CD8-positive, alpha-beta memory T cell (primary cell): ENCODE measurements at regions of chr12 and their contacts with region 1.

Region 1: DNA sequence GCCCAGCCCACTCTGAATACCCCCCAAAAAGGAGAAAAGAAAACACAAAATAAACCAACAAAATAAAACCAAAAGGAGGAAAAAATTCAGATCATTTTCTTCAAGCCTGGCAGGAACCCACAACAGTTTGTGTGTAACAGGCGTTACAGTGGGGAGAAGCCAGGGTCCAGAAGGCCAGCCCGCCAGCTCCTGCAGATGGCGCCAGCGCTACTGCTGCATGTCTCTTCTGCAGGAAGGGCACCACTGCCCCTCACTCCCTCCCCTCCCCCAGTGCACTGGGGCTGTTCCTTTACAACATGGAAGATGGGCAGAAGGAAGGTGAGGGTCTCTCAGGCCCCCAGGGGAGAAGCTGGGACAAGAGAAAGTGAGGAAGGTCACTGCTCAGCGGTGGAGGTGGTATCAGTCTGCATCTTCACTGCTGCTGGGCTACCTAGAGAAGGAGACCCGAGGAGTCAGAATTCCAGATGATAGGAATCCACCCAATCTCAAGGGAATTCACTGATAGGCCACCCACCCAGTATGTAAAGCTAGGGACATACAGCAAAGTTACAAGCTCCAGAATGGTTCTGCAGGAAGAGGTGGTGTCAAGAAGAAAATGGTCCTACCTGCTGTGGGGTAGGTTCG is 2.3 kb upstream of the NOP2 start:
- DNase-seq: peak in 3 of 5 donors; percentile 15 to 57 (median 20)
- H3K4me3 ChIP-seq: no peak overlapping the region
- H3K4me3 Mint-ChIP-seq: peak overlapping the region in 5 of 7 donors; percentile 67 to 100 (median 98)
- H3K27ac ChIP-seq: no peak overlapping the region
- H3K27ac Mint-ChIP-seq: peak overlapping the region; percentile 34 to 100 (median 80)
- H3K4me1 ChIP-seq: peaks cover 16% of the 10 kb centered on the region
- H3K4me1 Mint-ChIP-seq: peaks cover 41 to 49% (median 42%) of the 10 kb centered on the region in 3 donors
- H3K27me3 ChIP-seq: no peaks in the 10 kb centered on the region
- H3K27me3 Mint-ChIP-seq: peaks cover 0 to 2% of the 10 kb centered on the region in 2 donors

Region 2: GRCh38 chr12:6476489-6476888 is 93.9 kb before region 1 on chr12:
- CTCF ChIA-PET with region 1: no interaction called
- POLR2A ChIA-PET with region 1: no interaction called
- DNase-seq: no peak
- H3K4me3 ChIP-seq: no peak overlapping the region
- H3K4me3 Mint-ChIP-seq: peak overlapping the region in 1 of 7 donors; percentile 4
- H3K27ac ChIP-seq: no peak overlapping the region
- H3K27ac Mint-ChIP-seq: no peak overlapping the region
- H3K4me1 ChIP-seq: no peaks in the 10 kb centered on the region
- H3K4me1 Mint-ChIP-seq: peaks cover 0 to 3% (median under 1%) of the 10 kb centered on the region in 3 donors
- H3K27me3 ChIP-seq: no peaks in the 10 kb centered on the region
- H3K27me3 Mint-ChIP-seq: peaks cover 6 to 15% of the 10 kb centered on the region in 2 donors

Region 3: DNA sequence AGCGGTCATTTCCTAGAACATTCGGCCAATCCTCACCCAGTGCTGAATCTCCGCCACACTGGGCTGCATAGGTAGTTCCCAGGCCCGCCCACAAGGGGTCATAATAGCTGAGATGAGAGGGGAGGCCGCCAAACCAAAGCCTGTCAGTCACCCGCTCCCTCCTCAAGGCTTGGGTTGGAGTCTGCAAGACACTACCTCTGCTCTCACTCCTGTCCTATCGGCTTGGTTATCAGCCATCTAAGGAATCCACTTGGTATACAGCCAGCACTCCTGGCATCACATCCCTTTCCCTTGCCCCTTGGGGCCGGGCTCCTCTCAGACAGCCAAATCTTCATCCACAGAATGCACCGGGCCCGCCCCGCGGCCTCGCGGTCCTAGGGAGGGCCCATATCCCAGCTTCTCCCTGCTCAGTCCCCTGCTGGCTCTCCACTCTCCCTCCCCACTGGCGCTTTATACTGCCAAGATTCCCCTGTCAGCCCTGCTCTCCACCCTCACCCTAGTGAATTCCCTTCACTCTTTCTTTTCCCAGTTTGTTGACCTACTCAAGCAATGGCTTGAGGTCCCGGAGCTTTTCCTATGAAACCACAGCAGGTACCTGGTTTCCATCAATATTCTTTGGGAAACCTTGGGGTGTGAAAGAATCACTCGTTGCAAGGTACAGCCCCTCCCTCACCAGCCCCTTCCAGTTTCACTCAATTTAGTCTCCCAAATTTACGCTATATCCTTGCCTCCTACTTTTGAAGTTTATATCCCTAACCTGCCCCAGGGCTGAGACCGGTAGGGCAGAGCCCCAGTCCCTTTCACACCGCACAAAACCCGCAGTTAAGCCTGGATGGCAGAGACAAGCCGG is 16.0 kb before region 1 on chr12:
- CTCF ChIA-PET with region 1: interaction called, 17 read pairs
- POLR2A ChIA-PET with region 1: no interaction called
- DNase-seq: peak; percentile 55 to 81 (median 61)
- H3K4me3 ChIP-seq: peak overlapping the region; percentile 70
- H3K4me3 Mint-ChIP-seq: peak overlapping the region; percentile 86 to 97 (median 94)
- H3K27ac ChIP-seq: no peak overlapping the region
- H3K27ac Mint-ChIP-seq: peak overlapping the region in 7 of 8 donors; percentile 56 to 96 (median 81)
- H3K4me1 ChIP-seq: peaks cover 36% of the 10 kb centered on the region
- H3K4me1 Mint-ChIP-seq: peaks cover 42 to 58% (median 51%) of the 10 kb centered on the region in 3 donors
- H3K27me3 ChIP-seq: no peaks in the 10 kb centered on the region
- H3K27me3 Mint-ChIP-seq: no peaks in the 10 kb centered on the region

Region 4: GRCh38 chr12:6559500-6559899 is 10.9 kb before region 1 on chr12:
- CTCF ChIA-PET with region 1: interaction called, 17 read pairs
- POLR2A ChIA-PET with region 1: no interaction called
- DNase-seq: no peak
- H3K4me3 ChIP-seq: no peak overlapping the region
- H3K4me3 Mint-ChIP-seq: peak overlapping the region in 1 of 7 donors; percentile 75
- H3K27ac ChIP-seq: no peak overlapping the region
- H3K27ac Mint-ChIP-seq: peak overlapping the region in 3 of 8 donors; percentile 30 to 63 (median 42)
- H3K4me1 ChIP-seq: peaks cover 29% of the 10 kb centered on the region
- H3K4me1 Mint-ChIP-seq: peaks cover 24 to 33% (median 27%) of the 10 kb centered on the region in 3 donors
- H3K27me3 ChIP-seq: no peaks in the 10 kb centered on the region
- H3K27me3 Mint-ChIP-seq: no peaks in the 10 kb centered on the region

Region 5: DNA sequence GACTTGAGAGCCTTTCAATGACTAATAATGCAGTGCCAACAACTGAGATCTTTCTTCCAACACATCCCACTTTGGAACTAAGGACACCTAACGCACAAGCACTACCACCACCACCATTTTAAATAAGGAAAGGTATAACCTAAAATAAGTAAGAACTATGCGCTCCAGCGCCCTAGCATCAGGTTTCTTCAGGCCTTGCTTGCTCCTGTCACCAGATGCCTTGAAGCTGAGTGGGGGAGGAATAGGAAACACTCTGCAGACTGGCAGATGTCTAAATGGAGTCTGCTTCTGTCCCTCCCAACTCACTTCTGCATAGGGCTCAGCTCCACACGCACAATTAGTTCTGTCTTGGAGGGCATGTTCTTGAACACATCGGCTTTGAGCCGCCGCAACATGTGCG is 21.7 kb after region 1 on chr12:
- CTCF ChIA-PET with region 1: interaction called, 11 read pairs
- POLR2A ChIA-PET with region 1: no interaction called
- DNase-seq: no peak
- H3K4me3 ChIP-seq: no peak overlapping the region
- H3K4me3 Mint-ChIP-seq: no peak overlapping the region
- H3K27ac ChIP-seq: no peak overlapping the region
- H3K27ac Mint-ChIP-seq: peak overlapping the region in 4 of 8 donors; percentile 11 to 57 (median 46)
- H3K4me1 ChIP-seq: no peaks in the 10 kb centered on the region
- H3K4me1 Mint-ChIP-seq: peaks cover 0 to 5% (median 0%) of the 10 kb centered on the region in 3 donors
- H3K27me3 ChIP-seq: no peaks in the 10 kb centered on the region
- H3K27me3 Mint-ChIP-seq: no peaks in the 10 kb centered on the region

Region 6: GRCh38 chr12:6662906-6663742 is 92.7 kb after region 1 on chr12 and contains the start of gene ING4:
- CTCF ChIA-PET with region 1: no interaction called
- POLR2A ChIA-PET with region 1: no interaction called
- DNase-seq: peak; percentile 91 to 99 (median 97)
- H3K4me3 ChIP-seq: peak within 1 kb of the TSS; percentile 76
- H3K4me3 Mint-ChIP-seq: peak within 1 kb of the TSS; percentile 90 to 98 (median 95)
- H3K27ac ChIP-seq: peak within 1 kb of the TSS; percentile 83
- H3K27ac Mint-ChIP-seq: peak within 1 kb of the TSS; percentile 88 to 99 (median 98)
- H3K4me1 ChIP-seq: peaks cover 20% of the 10 kb centered on the region
- H3K4me1 Mint-ChIP-seq: peaks cover 27 to 42% (median 34%) of the 10 kb centered on the region in 3 donors
- H3K27me3 ChIP-seq: no peaks in the 10 kb centered on the region
- H3K27me3 Mint-ChIP-seq: no peaks in the 10 kb centered on the region
- total RNA-seq, gene ING4: 17.4 to 18.5 TPM